HCT116 (cell line): ENCODE measurements at regions of chr18 and their contacts with region 1.

Region 1: GRCh38 chr18:72492497-72492896 is 51.6 kb downstream of the CBLN2 start:
- DNase-seq: no peak
- ATAC-seq: no peak
- H3K4me3 ChIP-seq: no peak overlapping the region
- H3K27ac ChIP-seq: no peak overlapping the region
- H3K4me1 ChIP-seq: no peaks in the 10 kb centered on the region
- H3K27me3 ChIP-seq: no peaks in the 10 kb centered on the region
- CTCF ChIP-seq: no peak
- POLR2A ChIP-seq: no peak
- RAD21 ChIP-seq: no peak

Region 2: DNA sequence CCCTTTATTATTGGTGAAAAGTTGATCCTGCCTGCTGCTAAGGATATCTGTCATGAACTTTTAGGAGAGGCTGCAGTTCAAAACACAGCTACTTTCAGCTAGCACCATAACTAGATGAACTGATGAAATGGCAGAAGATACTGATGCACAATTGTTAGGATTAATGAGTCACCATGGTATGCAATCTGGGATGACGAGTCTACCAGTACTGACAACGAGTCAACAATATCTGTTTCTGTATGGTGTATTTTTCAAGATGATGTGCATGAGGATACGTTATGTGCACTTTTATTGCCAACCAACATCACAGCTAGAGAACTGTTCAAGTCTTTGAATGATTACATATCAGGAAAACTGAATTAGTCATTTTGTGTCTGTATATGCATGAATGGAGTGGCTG is 306.6 kb after region 1 on chr18:
- CTCF ChIA-PET with region 1: no interaction called
- POLR2A ChIA-PET with region 1: no interaction called
- RAD21 ChIA-PET with region 1: no interaction called
- intact Hi-C with region 1: no loop called
- DNase-seq: no peak
- ATAC-seq: no peak
- H3K4me3 ChIP-seq: no peak overlapping the region
- H3K27ac ChIP-seq: no peak overlapping the region
- H3K4me1 ChIP-seq: no peaks in the 10 kb centered on the region
- H3K27me3 ChIP-seq: no peaks in the 10 kb centered on the region
- CTCF ChIP-seq: no peak
- POLR2A ChIP-seq: no peak
- RAD21 ChIP-seq: no peak

Region 3: DNA sequence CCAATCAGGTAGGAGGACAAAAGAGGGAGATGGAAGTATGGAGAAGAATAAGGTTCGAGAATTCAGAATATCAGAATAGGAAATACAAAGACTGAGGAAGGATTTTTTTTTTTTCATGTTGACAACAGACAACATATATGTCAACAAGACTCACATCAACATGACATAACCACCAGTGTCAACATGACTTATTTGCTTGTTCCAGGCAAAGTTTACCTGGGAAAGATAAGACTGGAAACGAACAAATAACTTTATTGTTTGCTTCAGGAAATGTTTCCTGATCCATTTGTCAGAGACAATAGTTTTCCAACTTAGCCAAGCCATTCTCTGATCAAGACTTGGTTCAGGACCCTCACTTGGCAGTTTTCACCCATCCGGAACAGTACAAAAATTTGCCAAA is 697.2 kb after region 1 on chr18:
- CTCF ChIA-PET with region 1: no interaction called
- POLR2A ChIA-PET with region 1: no interaction called
- RAD21 ChIA-PET with region 1: no interaction called
- intact Hi-C with region 1: loop called (anchors 10 kb)
- DNase-seq: no peak
- ATAC-seq: no peak
- H3K4me3 ChIP-seq: no peak overlapping the region
- H3K27ac ChIP-seq: no peak overlapping the region
- H3K4me1 ChIP-seq: no peaks in the 10 kb centered on the region
- H3K27me3 ChIP-seq: no peaks in the 10 kb centered on the region
- CTCF ChIP-seq: no peak
- POLR2A ChIP-seq: no peak
- RAD21 ChIP-seq: no peak